IMR-90 (cell line): ENCODE measurements at regions of chr17 and their contacts with region 1.

Region 1: DNA sequence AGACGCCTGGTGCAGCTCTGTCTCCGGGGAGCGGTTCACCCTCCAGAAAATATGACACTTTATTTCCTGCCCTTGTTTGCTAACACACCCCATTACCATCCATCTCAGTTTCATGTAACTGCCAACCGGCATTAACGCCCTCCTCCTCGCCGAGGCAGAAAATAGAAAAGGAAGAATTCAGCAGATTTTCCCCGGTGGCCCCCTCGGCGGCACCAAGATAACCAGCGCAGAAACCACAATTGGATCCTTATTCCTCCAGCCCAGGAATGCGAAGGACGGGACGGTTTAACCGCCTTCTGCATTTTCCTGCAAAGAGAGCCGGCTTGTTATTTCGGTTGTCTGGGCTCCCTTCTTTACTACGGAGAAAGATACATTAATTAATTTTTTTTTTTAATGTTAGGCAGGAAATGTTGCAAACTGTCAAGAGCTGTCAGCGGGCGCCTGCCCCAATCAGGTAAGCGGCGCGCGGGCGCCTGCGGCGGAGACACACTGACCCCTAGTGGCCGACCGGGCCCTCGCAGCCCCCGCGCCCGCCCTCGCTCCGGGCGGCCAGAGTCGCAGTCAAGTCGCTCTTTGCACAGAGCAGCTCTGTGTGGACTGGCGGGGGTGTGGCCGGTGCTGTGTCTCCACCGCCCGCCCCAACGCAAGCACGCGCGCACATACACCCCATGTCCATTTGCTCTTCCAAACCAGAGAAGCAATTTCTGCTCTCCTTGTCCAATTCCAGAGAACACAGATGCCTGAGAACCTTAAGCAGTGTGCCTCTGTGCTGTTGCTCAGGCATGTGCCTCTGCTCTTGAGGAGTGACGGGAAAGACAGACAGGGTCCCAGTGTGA is 53.6 kb downstream of the C17orf67 start:
- DNase-seq: peak; percentile 66
- ATAC-seq: peak; percentile 97
- H3K4me3 ChIP-seq: peak overlapping the region; percentile 28
- H3K27ac ChIP-seq: peak overlapping the region; percentile 0; the same call in 1 of the 2 replicates
- H3K4me1 ChIP-seq: peaks cover 6% of the 10 kb centered on the region
- H3K27me3 ChIP-seq: no peaks in the 10 kb centered on the region
- CTCF ChIP-seq: peak; percentile 98
- POLR2A ChIP-seq: 0 out of 2 replicates have a peak, but pooled peaks have one; percentile 26
- RAD21 ChIP-seq: peak; percentile 96

Region 2: GRCh38 chr17:56416682-56417351 is 363.3 kb before region 1 on chr17:
- CTCF ChIA-PET with region 1: no interaction called
- POLR2A ChIA-PET with region 1: no interaction called
- dilution Hi-C with region 1: no loop called
- in situ Hi-C with region 1: no loop called
- intact Hi-C with region 1: no loop called
- DNase-seq: no peak
- ATAC-seq: no peak
- H3K4me3 ChIP-seq: no peak overlapping the region
- H3K27ac ChIP-seq: no peak overlapping the region
- H3K4me1 ChIP-seq: no peaks in the 10 kb centered on the region
- H3K27me3 ChIP-seq: no peaks in the 10 kb centered on the region
- CTCF ChIP-seq: no peak
- POLR2A ChIP-seq: no peak
- RAD21 ChIP-seq: no peak

Region 3: GRCh38 chr17:56499799-56500388 is 280.2 kb before region 1 on chr17:
- CTCF ChIA-PET with region 1: no interaction called
- POLR2A ChIA-PET with region 1: no interaction called
- dilution Hi-C with region 1: no loop called
- in situ Hi-C with region 1: no loop called
- intact Hi-C with region 1: loop called (anchors 1 kb)
- DNase-seq: peak; percentile 37
- ATAC-seq: no peak
- H3K4me3 ChIP-seq: no peak overlapping the region
- H3K27ac ChIP-seq: no peak overlapping the region
- H3K4me1 ChIP-seq: no peaks in the 10 kb centered on the region
- H3K27me3 ChIP-seq: no peaks in the 10 kb centered on the region; the same call in 1 of the 2 replicates
- CTCF ChIP-seq: peak; percentile 54
- POLR2A ChIP-seq: no peak
- RAD21 ChIP-seq: peak; percentile 63

Region 4: GRCh38 chr17:56679115-56679766 is 100.9 kb before region 1 on chr17:
- CTCF ChIA-PET with region 1: interaction called, 4 read pairs
- POLR2A ChIA-PET with region 1: no interaction called
- dilution Hi-C with region 1: no loop called
- in situ Hi-C with region 1: no loop called
- intact Hi-C with region 1: loop called (anchors 2 kb)
- DNase-seq: peak; percentile 56
- ATAC-seq: peak; percentile 65
- H3K4me3 ChIP-seq: no peak overlapping the region
- H3K27ac ChIP-seq: no peak overlapping the region
- H3K4me1 ChIP-seq: peaks cover 6% of the 10 kb centered on the region
- H3K27me3 ChIP-seq: peaks cover 30% of the 10 kb centered on the region
- CTCF ChIP-seq: peak; percentile 58
- POLR2A ChIP-seq: no peak
- RAD21 ChIP-seq: peak; percentile 54

Region 5: DNA sequence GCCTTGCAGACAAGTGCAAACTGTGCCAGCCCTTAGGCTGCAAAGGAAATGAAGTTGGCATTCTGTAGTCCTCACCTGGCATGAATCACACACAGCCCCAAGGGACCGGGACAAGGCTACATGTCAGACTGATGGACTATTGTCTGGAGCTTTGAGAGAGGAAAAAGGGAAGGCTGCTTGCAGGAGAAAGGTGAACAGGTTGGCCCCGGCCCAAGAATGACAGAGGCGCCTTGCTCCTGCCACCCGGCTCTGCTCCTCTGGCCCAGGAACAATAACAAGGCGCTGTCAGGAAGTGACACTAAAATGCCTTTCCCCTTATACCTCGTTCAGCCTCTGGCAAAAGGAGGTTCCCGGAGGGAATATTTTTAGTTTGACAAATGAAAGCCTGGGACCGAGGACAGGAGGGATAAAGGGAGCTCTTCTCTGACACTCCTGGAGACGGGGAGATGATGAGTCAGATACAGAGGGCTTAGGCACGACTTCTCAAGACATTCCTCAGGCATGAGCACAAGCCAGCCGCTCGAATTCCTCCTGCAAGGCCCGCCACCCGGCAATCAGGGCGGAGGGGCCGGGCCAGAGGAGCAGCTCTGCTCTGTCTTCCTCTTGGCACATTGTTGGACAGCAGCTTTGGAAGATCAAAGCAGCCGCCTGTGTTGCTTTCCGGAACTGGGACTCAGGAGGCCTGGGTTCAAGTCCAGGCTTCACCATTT is 80.8 kb before region 1 on chr17:
- CTCF ChIA-PET with region 1: interaction called, 4 read pairs
- POLR2A ChIA-PET with region 1: no interaction called
- dilution Hi-C with region 1: no loop called
- in situ Hi-C with region 1: no loop called
- intact Hi-C with region 1: loop called (anchors 5 kb)
- DNase-seq: peak; percentile 99
- ATAC-seq: peak; percentile 97
- H3K4me3 ChIP-seq: no peak overlapping the region
- H3K27ac ChIP-seq: peak overlapping the region; percentile 41
- H3K4me1 ChIP-seq: peaks cover 10% of the 10 kb centered on the region
- H3K27me3 ChIP-seq: no peaks in the 10 kb centered on the region
- CTCF ChIP-seq: no peak
- POLR2A ChIP-seq: no peak
- RAD21 ChIP-seq: no peak

Region 6: GRCh38 chr17:56727876-56728620 is 52.1 kb before region 1 on chr17:
- CTCF ChIA-PET with region 1: interaction called, 12 read pairs
- POLR2A ChIA-PET with region 1: no interaction called
- dilution Hi-C with region 1: no loop called
- in situ Hi-C with region 1: loop called (anchors 10 kb)
- intact Hi-C with region 1: no loop called
- DNase-seq: no peak
- ATAC-seq: no peak
- H3K4me3 ChIP-seq: no peak overlapping the region
- H3K27ac ChIP-seq: no peak overlapping the region
- H3K4me1 ChIP-seq: peaks cover 4% of the 10 kb centered on the region
- H3K27me3 ChIP-seq: peaks cover 17% of the 10 kb centered on the region
- CTCF ChIP-seq: no peak
- POLR2A ChIP-seq: no peak
- RAD21 ChIP-seq: no peak

Region 7: DNA sequence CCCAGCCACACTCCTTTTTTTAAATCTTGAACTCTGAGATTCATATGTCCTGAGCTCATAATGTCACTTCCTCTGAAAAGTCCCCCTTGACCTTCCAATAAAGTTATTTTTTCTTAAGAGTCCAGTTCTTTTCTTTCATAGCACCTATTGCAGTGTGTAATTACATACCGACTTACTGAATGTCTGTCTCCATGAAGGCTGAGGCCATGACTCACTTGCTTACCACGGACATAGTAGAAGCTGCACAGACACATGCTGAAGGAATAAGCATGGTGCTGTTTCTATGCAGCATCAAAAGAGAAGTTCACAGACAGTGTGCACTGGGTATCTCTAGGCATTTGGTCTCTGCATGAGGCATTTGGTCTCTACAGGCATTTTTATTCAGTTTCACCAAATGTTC is 23.6 kb before region 1 on chr17:
- CTCF ChIA-PET with region 1: interaction called, 8 read pairs
- POLR2A ChIA-PET with region 1: no interaction called
- dilution Hi-C with region 1: no loop called
- in situ Hi-C with region 1: no loop called
- intact Hi-C with region 1: loop called (anchors 2 kb)
- DNase-seq: peak; percentile 98
- ATAC-seq: peak; percentile 93
- H3K4me3 ChIP-seq: no peak overlapping the region
- H3K27ac ChIP-seq: peak overlapping the region; percentile 74
- H3K4me1 ChIP-seq: peaks cover 19% of the 10 kb centered on the region
- H3K27me3 ChIP-seq: no peaks in the 10 kb centered on the region
- CTCF ChIP-seq: no peak
- POLR2A ChIP-seq: no peak
- RAD21 ChIP-seq: no peak